Heart left ventricle (tissue), 16 donors: ENCODE measurements at regions of chr2 and their contacts with region 1.

Region 1: GRCh38 chr2:2769481-2770431 is 438.7 kb upstream of the MYT1L start:
- DNase-seq: peak; percentile 77 to 89 (median 82)
- ATAC-seq: peak; percentile 96 to 99 (median 98)
- H3K4me3 ChIP-seq: peak overlapping the region in 3 of 12 donors; percentile 9 to 21 (median 17)
- H3K27ac ChIP-seq: peak overlapping the region; percentile 44 to 91 (median 80)
- H3K4me1 ChIP-seq: peaks cover 0 to 13% (median 3%) of the 10 kb centered on the region in 12 donors
- H3K27me3 ChIP-seq: no peaks in the 10 kb centered on the region
- CTCF ChIP-seq: peak in 8 of 12 donors; percentile 15 to 45 (median 26)
- POLR2A ChIP-seq: no peak

Region 2: GRCh38 chr2:2613279-2614199 is 156.2 kb before region 1 on chr2:
- intact Hi-C with region 1: loop called in 1 of 10 experiments (anchors 5 kb)
- DNase-seq: peak; percentile 87 to 95 (median 90)
- ATAC-seq: peak; percentile 99 to 100 (median 100)
- H3K4me3 ChIP-seq: peak overlapping the region in 11 of 12 donors; percentile 7 to 62 (median 51)
- H3K27ac ChIP-seq: peak overlapping the region in 11 of 12 donors; percentile 36 to 76 (median 60)
- H3K4me1 ChIP-seq: peaks cover 0 to 11% (median 0%) of the 10 kb centered on the region in 12 donors
- H3K27me3 ChIP-seq: peaks cover 0 to 4% (median 0%) of the 10 kb centered on the region in 9 donors
- CTCF ChIP-seq: no peak
- POLR2A ChIP-seq: peak in 1 of 2 donors; percentile 44

Region 3: GRCh38 chr2:2846332-2847208 is 76.8 kb after region 1 on chr2:
- intact Hi-C with region 1: loop called in 2 of 10 experiments (anchors 5 kb)
- DNase-seq: peak in 4 of 5 donors; percentile 60 to 84 (median 64)
- ATAC-seq: peak; percentile 64 to 78 (median 72)
- H3K4me3 ChIP-seq: no peak overlapping the region
- H3K27ac ChIP-seq: peak overlapping the region in 5 of 12 donors; percentile 4 to 59 (median 54)
- H3K4me1 ChIP-seq: peaks cover 0 to 19% (median 10%) of the 10 kb centered on the region in 12 donors
- H3K27me3 ChIP-seq: no peaks in the 10 kb centered on the region
- CTCF ChIP-seq: peak in 1 of 12 donors; percentile 10
- POLR2A ChIP-seq: no peak